Naive thymus-derived CD4-positive, alpha-beta T cell (primary cell): ENCODE measurements at regions of chr3 and their contacts with region 1.

Region 1: DNA sequence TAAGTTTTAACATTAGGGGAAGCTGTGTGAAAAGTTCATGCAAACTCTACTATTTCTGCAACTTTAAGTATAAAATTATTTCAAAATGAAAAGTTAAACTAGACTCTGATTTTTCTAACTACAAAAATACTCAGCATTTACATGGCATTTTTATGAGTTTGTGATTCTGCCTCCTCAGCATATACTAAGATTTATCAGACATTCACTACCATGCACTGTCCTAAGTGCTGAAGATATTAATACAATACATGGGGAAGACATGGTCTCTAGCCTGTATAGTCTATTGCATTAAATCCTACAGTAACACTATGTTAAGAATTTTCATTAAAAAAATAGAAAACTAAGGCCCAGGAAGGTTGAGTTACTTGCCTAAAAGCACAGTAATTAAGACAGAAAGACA is 80.7 kb downstream of the ZNF148 start:
- DNase-seq: no peak
- ATAC-seq: no peak
- H3K4me3 ChIP-seq: no peak overlapping the region
- H3K4me3 Mint-ChIP-seq: no peak overlapping the region
- H3K27ac ChIP-seq: no peak overlapping the region
- H3K27ac Mint-ChIP-seq: no peak overlapping the region
- H3K4me1 ChIP-seq: no peaks in the 10 kb centered on the region
- H3K4me1 Mint-ChIP-seq: peaks cover 8 to 83% (median 71%) of the 10 kb centered on the region in 7 donors
- H3K27me3 ChIP-seq: no peaks in the 10 kb centered on the region
- H3K27me3 Mint-ChIP-seq: no peaks in the 10 kb centered on the region

Region 2: DNA sequence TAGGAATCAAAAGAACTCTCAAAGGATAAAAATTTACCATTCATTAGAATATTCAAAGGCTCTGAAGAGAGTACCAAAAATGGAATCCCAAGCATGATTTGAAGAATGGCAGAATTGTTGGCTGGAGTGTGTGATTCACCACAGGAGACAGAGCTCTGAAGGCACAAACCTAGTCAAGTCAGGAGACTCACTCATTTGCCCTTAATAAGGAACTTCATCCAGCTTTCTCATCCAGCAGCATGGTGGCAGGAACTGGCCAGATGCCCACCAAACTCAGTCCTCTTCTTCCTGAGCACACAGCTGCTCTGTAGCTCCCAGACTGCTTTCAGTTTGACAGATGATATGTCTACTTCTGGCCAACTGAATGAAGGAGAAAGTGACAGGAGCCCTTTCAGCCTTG is 222.1 kb before region 1 on chr3:
- CTCF ChIA-PET with region 1: no interaction called
- POLR2A ChIA-PET with region 1: no interaction called
- intact Hi-C with region 1: no loop called
- DNase-seq: no peak
- ATAC-seq: no peak
- H3K4me3 ChIP-seq: no peak overlapping the region
- H3K4me3 Mint-ChIP-seq: no peak overlapping the region
- H3K27ac ChIP-seq: no peak overlapping the region
- H3K27ac Mint-ChIP-seq: no peak overlapping the region
- H3K4me1 ChIP-seq: no peaks in the 10 kb centered on the region
- H3K4me1 Mint-ChIP-seq: peaks cover 0 to 28% (median 13%) of the 10 kb centered on the region in 7 donors
- H3K27me3 ChIP-seq: no peaks in the 10 kb centered on the region
- H3K27me3 Mint-ChIP-seq: peaks cover 0 to 28% (median 0%) of the 10 kb centered on the region in 5 donors

Region 3: GRCh38 chr3:125280668-125281361 is 13.6 kb before region 1 on chr3:
- CTCF ChIA-PET with region 1: no interaction called
- POLR2A ChIA-PET with region 1: no interaction called
- intact Hi-C with region 1: loop called in 1 of 2 experiments (anchors 2 kb)
- DNase-seq: no peak
- ATAC-seq: no peak
- H3K4me3 ChIP-seq: no peak overlapping the region
- H3K4me3 Mint-ChIP-seq: no peak overlapping the region
- H3K27ac ChIP-seq: no peak overlapping the region
- H3K27ac Mint-ChIP-seq: peak overlapping the region in 1 of 9 donors; percentile 45
- H3K4me1 ChIP-seq: no peaks in the 10 kb centered on the region
- H3K4me1 Mint-ChIP-seq: peaks cover 4 to 47% (median 34%) of the 10 kb centered on the region in 7 donors
- H3K27me3 ChIP-seq: no peaks in the 10 kb centered on the region
- H3K27me3 Mint-ChIP-seq: no peaks in the 10 kb centered on the region